ENCODE measurements at regions of chr1 and their contacts with region 1.

Region 1: DNA sequence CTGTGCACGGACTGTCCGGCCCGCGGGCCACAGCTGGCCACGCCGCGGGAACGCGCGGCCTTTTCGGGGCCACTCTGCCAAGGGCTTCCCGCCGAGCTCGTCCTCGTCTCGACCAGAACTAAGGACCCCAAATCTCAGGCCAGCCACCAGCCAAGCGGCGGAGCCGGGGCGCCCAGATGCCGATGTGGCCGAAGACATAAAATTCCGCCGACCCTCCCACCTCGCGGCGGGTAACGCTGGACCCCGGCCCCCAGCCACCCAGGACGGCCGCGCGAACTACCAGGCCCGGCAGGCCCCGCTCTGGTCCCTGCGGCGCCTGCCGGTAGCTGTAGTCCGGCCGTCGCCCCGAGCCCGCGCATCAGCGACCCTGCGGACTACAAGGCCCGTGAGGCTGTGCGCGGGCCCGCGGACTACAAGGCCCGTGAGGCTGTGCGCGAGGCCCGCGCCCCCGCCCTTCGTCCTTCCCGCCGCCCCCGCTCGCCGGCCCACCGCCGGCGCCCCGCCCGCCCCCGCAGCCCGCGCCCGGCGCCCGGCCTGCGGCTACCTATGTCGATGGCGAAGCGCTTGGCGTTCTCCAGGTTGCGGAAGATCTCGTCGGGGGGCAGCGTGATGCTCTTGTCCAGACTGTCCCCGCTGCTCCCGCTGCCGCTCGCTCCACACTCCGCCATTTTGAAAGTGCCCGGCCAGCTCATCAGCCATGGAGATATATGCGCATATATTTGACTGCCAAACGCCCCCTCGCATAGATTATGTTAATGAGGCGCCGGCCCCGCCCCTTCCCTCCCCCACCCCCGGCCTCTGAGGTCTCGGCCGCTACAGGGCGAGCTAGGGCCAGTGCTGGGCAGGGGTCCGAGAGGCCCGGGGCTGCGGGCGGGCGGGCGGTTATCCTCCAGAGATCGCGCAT is at the start of gene PANK4:
- DNase-seq: peak; percentile 93
- ATAC-seq: peak; percentile 89
- H3K4me3 Mint-ChIP-seq: peak within 1 kb of the TSS; percentile 81
- H3K27ac Mint-ChIP-seq: peak within 1 kb of the TSS; percentile 94
- H3K4me1 Mint-ChIP-seq: peaks cover 49% of the 10 kb centered on the region
- H3K27me3 Mint-ChIP-seq: peaks cover 19% of the 10 kb centered on the region
- total RNA-seq, gene PANK4: 55.9 to 66.8 TPM

Region 2: GRCh38 chr1:2556277-2556677 is 30.1 kb after region 1 on chr1 and contains the start of gene TNFRSF14:
- CTCF ChIA-PET with region 1: interaction called, 11 read pairs
- POLR2A ChIA-PET with region 1: interaction called, 9 read pairs
- DNase-seq: peak; percentile 90
- ATAC-seq: peak; percentile 77
- H3K4me3 Mint-ChIP-seq: peak within 1 kb of the TSS; percentile 97
- H3K27ac Mint-ChIP-seq: peak within 1 kb of the TSS; percentile 98
- H3K4me1 Mint-ChIP-seq: peaks cover 46% of the 10 kb centered on the region
- H3K27me3 Mint-ChIP-seq: no peaks in the 10 kb centered on the region
- total RNA-seq, gene TNFRSF14: 85.8 to 86.5 TPM

Region 3: DNA sequence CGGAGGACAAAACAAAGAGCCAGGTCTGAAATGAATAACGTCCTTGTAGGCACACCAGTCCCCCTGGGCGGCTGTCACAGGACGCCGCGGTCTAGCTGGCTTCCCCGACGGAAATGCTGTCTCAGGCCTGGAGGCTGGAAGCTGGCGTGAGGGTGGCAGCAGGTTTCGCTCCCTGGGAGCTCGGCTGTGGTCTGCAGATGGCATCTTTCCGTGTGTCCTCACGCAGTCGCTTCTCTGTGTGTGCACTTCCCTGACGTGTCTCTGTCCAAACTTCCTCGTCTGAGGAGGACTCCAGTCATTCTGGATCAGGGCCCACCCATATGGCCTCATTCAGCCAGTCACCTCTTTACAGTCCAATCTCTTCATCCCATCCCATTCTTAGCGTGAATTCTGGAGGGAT is 44.2 kb after region 1 on chr1:
- CTCF ChIA-PET with region 1: no interaction called
- POLR2A ChIA-PET with region 1: no interaction called
- DNase-seq: no peak
- ATAC-seq: no peak
- H3K4me3 Mint-ChIP-seq: no peak overlapping the region
- H3K27ac Mint-ChIP-seq: no peak overlapping the region
- H3K4me1 Mint-ChIP-seq: peaks cover 9% of the 10 kb centered on the region
- H3K27me3 Mint-ChIP-seq: peaks cover 5% of the 10 kb centered on the region

Measured in activated CD8-positive, alpha-beta T cell treated with anti-CD3 and anti-CD28 coated beads, Interleukin-2, amount 10 ng/mL, durations not matched to agents 7 days and 5 days (primary cell).